Panc1 (cell line): ENCODE measurements at regions of chr6 and their contacts with region 1.

Region 1: DNA sequence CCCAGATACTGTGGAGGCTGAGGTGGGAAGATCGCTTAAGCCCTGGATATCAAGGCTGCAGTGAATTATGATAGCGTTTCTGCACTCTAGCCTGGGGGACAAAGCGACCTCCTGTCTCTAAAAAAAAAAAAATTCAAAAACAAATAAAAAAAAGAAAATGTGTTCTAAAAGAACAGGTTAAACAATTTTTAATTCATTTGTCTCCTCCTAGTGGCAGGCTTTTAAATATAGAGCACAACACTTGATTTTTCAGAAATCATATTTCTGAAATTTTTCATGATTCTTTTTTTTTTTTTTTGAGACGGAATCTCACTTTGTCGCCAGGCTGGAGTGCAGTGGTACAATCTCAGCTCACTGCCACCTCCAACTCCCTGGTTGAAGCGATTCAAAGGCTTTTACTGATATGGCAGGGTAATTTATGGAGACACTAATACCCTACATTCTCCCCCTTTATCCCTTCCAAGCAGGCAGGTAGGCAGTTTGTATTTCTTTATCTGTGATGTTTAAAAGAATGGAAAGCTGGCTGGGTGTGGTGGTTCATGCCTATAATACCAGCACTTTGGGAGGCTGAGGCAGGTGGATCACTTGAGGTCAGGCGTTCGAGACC is 8.7 kb upstream of the GTF3C6 start:
- DNase-seq: no peak
- ATAC-seq: no peak
- H3K4me3 ChIP-seq: no peak overlapping the region
- H3K27ac ChIP-seq: no peak overlapping the region
- H3K4me1 ChIP-seq: peaks cover 7% of the 10 kb centered on the region; the same call in 1 of the 2 replicates
- H3K27me3 ChIP-seq: no peaks in the 10 kb centered on the region
- CTCF ChIP-seq: no peak; the same call in 1 of the 2 replicates

Region 2: GRCh38 chr6:110528101-110528929 is 421.5 kb before region 1 on chr6:
- CTCF ChIA-PET with region 1: no interaction called
- POLR2A ChIA-PET with region 1: no interaction called
- in situ Hi-C with region 1: no loop called
- intact Hi-C with region 1: loop called (anchors 1 kb)
- DNase-seq: peak; percentile 86
- ATAC-seq: peak; percentile 85
- H3K4me3 ChIP-seq: no peak overlapping the region
- H3K27ac ChIP-seq: peak overlapping the region; percentile 58; the same call in 1 of the 2 replicates
- H3K4me1 ChIP-seq: peaks cover 17% of the 10 kb centered on the region
- H3K27me3 ChIP-seq: no peaks in the 10 kb centered on the region
- CTCF ChIP-seq: peak; percentile 90

Region 3: DNA sequence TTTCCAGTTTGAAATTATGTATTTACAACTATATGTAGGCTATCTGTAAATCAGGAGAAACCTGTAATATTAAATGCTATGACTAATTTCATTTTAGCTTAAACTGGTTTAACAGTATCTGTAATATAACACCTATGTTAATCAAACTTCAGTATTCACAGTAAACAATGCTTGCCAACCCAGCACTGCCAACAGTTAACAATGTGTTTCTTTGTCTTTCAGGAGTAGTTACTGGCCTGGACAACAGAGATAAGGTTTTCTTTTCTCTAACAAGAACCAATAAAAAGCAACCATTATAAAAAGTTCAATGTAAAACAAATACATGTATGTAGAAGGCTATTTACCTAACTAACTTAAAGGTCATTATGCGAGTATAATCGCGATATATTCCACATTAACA is 293.3 kb before region 1 on chr6:
- CTCF ChIA-PET with region 1: no interaction called
- POLR2A ChIA-PET with region 1: interaction called, 15 read pairs
- in situ Hi-C with region 1: no loop called
- intact Hi-C with region 1: no loop called
- DNase-seq: no peak
- ATAC-seq: peak; percentile 55; the same call in 1 of the 2 replicates
- H3K4me3 ChIP-seq: no peak overlapping the region
- H3K27ac ChIP-seq: no peak overlapping the region
- H3K4me1 ChIP-seq: peaks cover 13% of the 10 kb centered on the region; the same call in 1 of the 2 replicates
- H3K27me3 ChIP-seq: no peaks in the 10 kb centered on the region
- CTCF ChIP-seq: no peak

Region 4: GRCh38 chr6:110682460-110682853 is 267.3 kb before region 1 on chr6:
- CTCF ChIA-PET with region 1: interaction called, 5 read pairs
- POLR2A ChIA-PET with region 1: interaction called, 9 read pairs
- in situ Hi-C with region 1: no loop called
- intact Hi-C with region 1: loop called (anchors 2 kb)
- DNase-seq: peak; percentile 92
- ATAC-seq: peak; percentile 99
- H3K4me3 ChIP-seq: no peak overlapping the region
- H3K27ac ChIP-seq: no peak overlapping the region; the same call in 1 of the 2 replicates
- H3K4me1 ChIP-seq: peaks cover 13% of the 10 kb centered on the region
- H3K27me3 ChIP-seq: no peaks in the 10 kb centered on the region
- CTCF ChIP-seq: peak; percentile 89

Region 5: GRCh38 chr6:110776413-110776812 is 173.4 kb before region 1 on chr6:
- CTCF ChIA-PET with region 1: no interaction called
- POLR2A ChIA-PET with region 1: interaction called, 15 read pairs
- in situ Hi-C with region 1: no loop called
- intact Hi-C with region 1: no loop called
- DNase-seq: no peak
- ATAC-seq: no peak
- H3K4me3 ChIP-seq: no peak overlapping the region
- H3K27ac ChIP-seq: no peak overlapping the region
- H3K4me1 ChIP-seq: no peaks in the 10 kb centered on the region
- H3K27me3 ChIP-seq: no peaks in the 10 kb centered on the region
- CTCF ChIP-seq: no peak

Region 6: GRCh38 chr6:110971468-110971867 is 21.7 kb after region 1 on chr6:
- CTCF ChIA-PET with region 1: no interaction called
- POLR2A ChIA-PET with region 1: interaction called, 12 read pairs
- in situ Hi-C with region 1: no loop called
- intact Hi-C with region 1: no loop called
- DNase-seq: no peak
- ATAC-seq: no peak
- H3K4me3 ChIP-seq: no peak overlapping the region
- H3K27ac ChIP-seq: no peak overlapping the region
- H3K4me1 ChIP-seq: no peaks in the 10 kb centered on the region
- H3K27me3 ChIP-seq: no peaks in the 10 kb centered on the region
- CTCF ChIP-seq: no peak